Spleen (tissue), 13 donors: ENCODE measurements at regions of chr20 and their contacts with region 1.

Region 1: GRCh38 chr20:63973636-63974402 is 4.1 kb upstream of the ZNF512B start:
- DNase-seq: peak; percentile 95
- H3K4me3 ChIP-seq: peak overlapping the region in 5 of 8 donors; percentile 4 to 55 (median 19)
- H3K27ac ChIP-seq: peak overlapping the region in 5 of 8 donors; percentile 45 to 68 (median 65)
- H3K4me1 ChIP-seq: peaks cover 22 to 74% (median 51%) of the 10 kb centered on the region in 6 donors
- H3K27me3 ChIP-seq: peaks cover 0 to 3% (median 0%) of the 10 kb centered on the region in 7 donors
- CTCF ChIP-seq: peak; percentile 95 to 99 (median 98)
- POLR2A ChIP-seq: no peak

Region 2: DNA sequence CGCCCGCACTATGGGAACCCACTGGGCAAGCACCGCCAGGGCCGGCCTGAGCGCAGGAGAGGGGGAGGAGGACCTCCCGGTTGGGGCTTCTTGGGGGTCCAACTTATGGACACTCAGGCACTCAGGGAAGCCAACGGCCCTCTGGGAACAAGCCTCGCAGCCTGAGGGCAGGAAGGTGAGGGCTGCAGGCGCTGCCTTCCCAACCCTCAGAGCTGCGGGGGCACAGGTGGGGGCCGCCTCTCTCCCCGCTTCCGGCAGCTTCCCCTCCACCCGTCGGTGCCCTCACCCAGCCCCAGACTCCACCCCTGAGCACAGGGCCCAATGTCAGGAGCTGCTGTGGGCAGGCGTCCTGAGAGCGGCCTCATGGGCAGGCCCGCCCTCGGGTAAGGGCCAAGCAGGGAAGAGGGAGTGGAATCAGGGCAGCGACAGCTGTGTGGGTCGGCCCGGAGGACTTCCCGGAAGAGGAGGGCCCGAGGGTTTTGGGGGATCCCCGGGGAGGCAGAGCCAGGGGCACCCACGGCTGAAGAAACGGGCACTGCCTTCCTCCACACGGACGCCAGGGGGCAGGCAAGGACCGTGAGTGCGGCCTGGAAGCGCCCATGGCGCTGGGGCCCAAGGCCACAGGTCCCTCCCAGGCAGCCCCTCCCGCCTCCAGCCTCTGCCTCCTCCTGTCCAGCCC is 436.2 kb before region 1 on chr20:
- intact Hi-C with region 1: loop called (anchors 5 kb)
- DNase-seq: peak; percentile 98
- H3K4me3 ChIP-seq: peak overlapping the region; percentile 3 to 67 (median 37)
- H3K27ac ChIP-seq: peak overlapping the region; percentile 67 to 89 (median 86)
- H3K4me1 ChIP-seq: peaks cover 17 to 81% (median 61%) of the 10 kb centered on the region in 6 donors
- H3K27me3 ChIP-seq: peaks cover 0 to 16% (median 0%) of the 10 kb centered on the region in 7 donors
- CTCF ChIP-seq: peak; percentile 98 to 100 (median 99)
- POLR2A ChIP-seq: peak in 1 of 3 donors; percentile 44

Region 3: DNA sequence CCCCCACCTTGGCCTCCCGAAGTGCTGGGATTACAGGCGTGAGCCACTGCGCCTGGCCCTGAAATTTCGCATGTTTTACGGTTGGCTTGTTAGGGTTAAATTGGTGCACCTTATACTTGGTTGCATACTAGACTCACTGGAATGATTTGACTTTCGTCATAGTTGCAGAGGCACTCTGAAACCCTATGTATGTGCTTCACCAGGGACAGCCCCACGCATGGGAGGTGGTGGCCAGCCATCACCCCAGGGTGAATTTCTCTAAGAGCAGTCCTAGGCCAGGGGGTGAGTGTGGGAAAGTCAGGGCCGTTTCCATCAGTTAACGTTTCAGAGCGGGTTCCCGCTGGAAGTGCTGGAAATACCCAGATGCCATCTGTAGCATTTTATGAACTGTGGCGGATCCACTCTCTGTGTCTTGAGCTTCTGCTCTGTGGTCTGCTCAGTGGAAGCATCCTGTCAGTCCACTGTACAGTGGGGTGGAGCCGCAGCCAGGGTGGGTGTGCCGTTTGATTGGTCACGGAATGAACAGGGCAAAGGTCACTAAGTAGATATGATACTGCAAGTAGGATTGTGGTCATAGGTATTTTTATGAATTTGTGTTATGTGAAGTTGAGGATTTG is 65.7 kb before region 1 on chr20:
- intact Hi-C with region 1: loop called (anchors 2 kb)
- DNase-seq: no peak
- H3K4me3 ChIP-seq: no peak overlapping the region
- H3K27ac ChIP-seq: peak overlapping the region in 3 of 8 donors; percentile 13 to 97 (median 24)
- H3K4me1 ChIP-seq: peaks cover 19 to 100% (median 69%) of the 10 kb centered on the region in 6 donors
- H3K27me3 ChIP-seq: no peaks in the 10 kb centered on the region
- CTCF ChIP-seq: no peak
- POLR2A ChIP-seq: no peak

Region 4: GRCh38 chr20:64057628-64058498 is 84.0 kb after region 1 on chr20:
- intact Hi-C with region 1: no loop called
- DNase-seq: peak; percentile 95
- H3K4me3 ChIP-seq: peak overlapping the region in 6 of 8 donors; percentile 8 to 57 (median 25)
- H3K27ac ChIP-seq: peak overlapping the region; percentile 67 to 91 (median 85)
- H3K4me1 ChIP-seq: peaks cover 12 to 70% (median 63%) of the 10 kb centered on the region in 6 donors
- H3K27me3 ChIP-seq: peaks cover 0 to 45% (median 0%) of the 10 kb centered on the region in 7 donors
- CTCF ChIP-seq: peak; percentile 72 to 96 (median 90)
- POLR2A ChIP-seq: no peak

Region 5: DNA sequence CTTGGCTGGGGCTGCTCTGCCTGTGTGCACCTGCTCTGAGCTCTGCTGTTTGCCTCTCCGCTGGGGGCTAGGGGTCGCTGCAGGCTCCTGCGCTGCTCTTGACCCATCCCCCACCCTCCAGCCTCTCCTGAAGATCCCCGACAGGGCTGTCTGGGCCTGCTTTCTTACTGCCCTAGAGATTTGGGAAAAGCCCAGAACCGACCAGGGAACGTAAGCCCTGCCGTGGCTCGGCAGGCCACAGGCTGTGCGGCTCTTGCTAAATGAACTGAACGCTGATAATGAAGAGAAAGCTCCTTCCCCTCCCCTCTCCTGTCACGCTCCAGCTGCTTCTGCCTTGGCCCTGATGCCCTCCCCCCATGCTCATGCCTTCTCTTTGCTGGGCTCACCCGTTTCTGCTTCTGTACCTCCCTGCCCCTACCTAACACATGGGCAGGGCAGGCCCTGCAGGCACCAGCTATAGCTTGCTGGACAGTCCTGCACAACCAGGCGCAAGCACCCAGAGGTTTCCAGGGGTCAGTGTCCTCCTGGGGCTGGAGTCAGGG is 249.8 kb after region 1 on chr20:
- intact Hi-C with region 1: no loop called
- DNase-seq: no peak
- H3K4me3 ChIP-seq: no peak overlapping the region
- H3K27ac ChIP-seq: no peak overlapping the region
- H3K4me1 ChIP-seq: peaks cover 3 to 41% (median 9%) of the 10 kb centered on the region in 6 donors
- H3K27me3 ChIP-seq: peaks cover 0 to 30% (median 0%) of the 10 kb centered on the region in 7 donors
- CTCF ChIP-seq: no peak
- POLR2A ChIP-seq: no peak